ENCODE measurements at regions of chr3 and their contacts with region 1.

Region 1: DNA sequence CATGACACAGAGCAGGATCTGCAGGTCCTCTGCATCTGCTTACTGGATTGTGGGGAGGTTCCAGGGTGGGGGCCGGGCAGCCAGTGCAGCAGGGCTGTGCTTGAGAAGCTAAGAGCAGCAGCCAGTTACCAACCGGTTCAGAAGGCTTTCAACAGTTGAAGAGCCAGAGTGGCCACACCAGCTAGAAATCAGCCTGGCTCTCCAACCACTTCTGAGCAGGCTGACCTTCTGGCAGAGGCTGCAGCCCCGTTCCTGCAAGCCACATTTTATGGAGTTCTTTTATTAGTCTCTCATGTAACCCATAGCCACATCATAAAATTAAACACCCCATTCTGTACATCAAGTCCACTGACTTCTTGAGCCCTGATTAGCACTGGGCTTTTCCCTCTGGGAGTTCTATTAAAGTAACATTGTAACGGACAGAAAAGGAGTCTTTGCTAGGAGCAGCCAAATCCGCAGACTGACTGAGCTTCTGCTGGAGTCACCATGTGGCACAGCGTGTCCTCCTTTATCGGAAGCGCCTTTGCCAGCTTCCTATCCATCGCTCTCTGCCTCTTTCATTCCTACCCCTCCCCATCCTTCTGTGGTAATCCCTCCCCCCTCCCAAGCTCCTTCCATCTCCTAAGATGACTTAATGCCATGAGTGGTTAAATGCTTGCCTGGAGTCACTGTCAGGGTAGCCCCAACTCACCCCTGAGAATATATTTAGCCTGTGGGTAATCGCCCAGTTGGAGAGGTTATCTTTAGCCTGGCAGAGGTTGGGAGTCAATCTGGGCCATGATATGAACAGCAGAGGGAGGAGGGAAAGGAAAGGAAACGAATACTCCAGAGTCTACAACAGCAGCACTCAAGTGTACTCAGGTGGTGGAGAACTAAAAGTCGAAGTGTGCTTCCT is 138.5 kb upstream of the HES1 start:
- DNase-seq: peak; percentile 42 to 48
- ATAC-seq: peak; percentile 79 to 92 (median 85)
- H3K4me3 ChIP-seq: peak overlapping the region in 3 of 10 donors; percentile 16 to 26 (median 24)
- H3K27ac ChIP-seq: peak overlapping the region in 9 of 10 donors; percentile 45 to 79 (median 59)
- H3K4me1 ChIP-seq: peaks cover under 1 to 33% (median 28%) of the 10 kb centered on the region in 9 donors
- H3K27me3 ChIP-seq: peaks cover 0 to 8% (median 0%) of the 10 kb centered on the region in 7 donors
- CTCF ChIP-seq: no peak

Region 2: DNA sequence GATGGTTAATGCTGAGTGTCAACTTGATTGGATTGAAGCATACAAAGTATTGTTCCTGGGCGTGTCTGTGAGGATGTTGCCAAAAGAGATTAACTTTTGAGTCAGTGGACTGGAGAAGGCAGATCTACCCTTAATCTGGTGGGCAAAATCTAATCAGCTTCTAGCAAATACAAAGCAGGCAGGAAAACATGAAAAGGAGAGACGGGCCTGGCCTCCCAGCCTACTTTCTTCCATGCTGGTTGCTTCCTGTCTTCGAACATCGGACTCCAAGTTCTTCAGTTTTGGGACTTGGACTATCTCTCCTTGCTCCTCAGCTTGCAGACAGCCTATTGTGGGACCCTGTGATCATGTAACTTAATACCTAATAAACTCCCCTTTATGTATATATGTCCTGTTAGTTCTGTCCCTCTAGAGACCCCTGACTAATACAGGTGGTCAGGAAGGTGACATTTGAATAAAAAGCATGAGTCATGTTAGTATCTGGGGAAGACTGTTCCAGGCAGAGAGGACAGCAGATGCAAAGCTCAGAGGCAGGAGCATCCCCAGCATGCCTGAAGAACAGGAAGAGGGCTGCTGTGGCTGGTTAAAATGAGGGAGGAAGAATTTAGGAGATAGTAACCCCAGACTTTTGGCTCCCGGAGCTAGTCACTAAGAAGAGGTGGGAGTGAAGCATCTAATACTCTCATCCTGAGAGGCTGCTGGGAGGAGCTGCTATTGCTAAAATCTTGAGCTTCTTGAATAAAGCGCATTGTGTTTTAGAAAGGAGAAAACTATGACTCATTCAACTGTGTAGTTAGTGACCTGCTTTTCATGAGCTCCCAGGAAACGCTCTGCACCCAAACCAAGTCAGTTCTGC is 68.9 kb before region 1 on chr3:
- intact Hi-C with region 1: no loop called
- DNase-seq: no peak
- ATAC-seq: peak in 1 of 8 donors; percentile 48
- H3K4me3 ChIP-seq: no peak overlapping the region
- H3K27ac ChIP-seq: no peak overlapping the region
- H3K4me1 ChIP-seq: peaks cover 0 to 12% (median 0%) of the 10 kb centered on the region in 9 donors
- H3K27me3 ChIP-seq: peaks cover 0 to 5% (median 0%) of the 10 kb centered on the region in 7 donors
- CTCF ChIP-seq: no peak

Region 3: DNA sequence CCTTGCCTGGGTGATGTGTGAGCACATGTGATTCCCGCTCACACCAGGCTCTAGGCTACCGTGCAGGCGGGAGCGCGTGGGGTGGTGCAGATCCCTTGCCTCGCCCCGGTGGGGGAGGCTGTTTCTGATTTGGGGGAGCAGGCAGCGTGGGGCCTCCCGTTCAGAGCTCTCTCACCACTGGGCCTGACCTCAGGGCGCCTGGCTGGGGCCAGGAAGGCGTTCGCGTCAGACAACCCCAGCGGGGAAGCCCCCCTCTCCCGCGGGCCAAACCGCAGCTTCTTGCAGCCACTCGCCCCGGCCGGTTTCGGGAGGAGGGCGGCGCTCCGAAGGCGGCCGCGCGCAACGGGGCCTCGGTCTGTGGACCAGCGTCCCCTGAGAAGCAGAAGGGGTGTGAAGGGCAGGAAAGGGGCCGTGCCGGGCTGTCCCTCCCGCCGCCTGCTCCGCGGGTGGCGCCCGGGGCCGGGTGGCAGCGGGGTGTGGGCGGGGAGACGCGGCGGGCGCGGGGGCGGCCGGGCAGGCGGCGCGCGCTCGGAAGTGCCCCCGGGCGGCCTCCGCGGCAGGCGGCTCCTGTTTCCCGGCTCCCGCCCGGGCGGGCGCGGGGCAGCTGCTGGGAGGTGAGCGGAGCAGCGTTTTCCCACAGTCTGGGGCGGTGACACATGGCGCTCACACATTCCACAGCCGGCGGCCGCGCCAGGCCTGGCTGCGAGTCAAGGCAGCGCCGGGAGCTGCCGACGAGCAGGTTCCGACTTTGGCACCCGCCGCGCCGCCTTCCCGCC is 73.3 kb after region 1 on chr3:
- intact Hi-C with region 1: loop called in 5 of 10 experiments (anchors 5 to 10 kb)
- DNase-seq: peak; percentile 84 to 89
- ATAC-seq: peak; percentile 87 to 93 (median 92)
- H3K4me3 ChIP-seq: peak overlapping the region; percentile 25 to 64 (median 53)
- H3K27ac ChIP-seq: peak overlapping the region; percentile 59 to 96 (median 91)
- H3K4me1 ChIP-seq: peaks cover 0 to 32% (median 18%) of the 10 kb centered on the region in 9 donors
- H3K27me3 ChIP-seq: peaks cover 0 to 38% (median 11%) of the 10 kb centered on the region in 7 donors
- CTCF ChIP-seq: peak in 1 of 9 donors; percentile 10

Measured in heart right ventricle (tissue), 16 donors.